Activated B cell treated with CpG ODN at 0.5 μM for 24 hours (primary cell): ENCODE measurements at regions of chr4 and their contacts with region 1.

Region 1: GRCh38 chr4:169010125-169011023 is at the start of gene CBR4:
- DNase-seq: peak; percentile 86
- ATAC-seq: peak; percentile 96
- H3K4me3 Mint-ChIP-seq: peak within 1 kb of the TSS; percentile 92
- H3K27ac Mint-ChIP-seq: peak within 1 kb of the TSS; percentile 93
- H3K4me1 Mint-ChIP-seq: peaks cover 33% of the 10 kb centered on the region
- H3K27me3 Mint-ChIP-seq: no peaks in the 10 kb centered on the region
- CTCF ChIP-seq: no peak
- total RNA-seq, gene CBR4: 25.7 and 25.8 TPM in 2 replicates

Region 2: GRCh38 chr4:168480931-168481611 is 529.3 kb before region 1 on chr4:
- CTCF ChIA-PET with region 1: no interaction called
- POLR2A ChIA-PET with region 1: interaction called, 17 read pairs
- intact Hi-C with region 1: loop called (anchors 1 kb)
- DNase-seq: no peak
- ATAC-seq: peak; percentile 53
- H3K4me3 Mint-ChIP-seq: peak overlapping the region; percentile 100
- H3K27ac Mint-ChIP-seq: peak overlapping the region; percentile 99
- H3K4me1 Mint-ChIP-seq: peaks cover 41% of the 10 kb centered on the region
- H3K27me3 Mint-ChIP-seq: peaks cover 3% of the 10 kb centered on the region
- CTCF ChIP-seq: no peak

Region 3: DNA sequence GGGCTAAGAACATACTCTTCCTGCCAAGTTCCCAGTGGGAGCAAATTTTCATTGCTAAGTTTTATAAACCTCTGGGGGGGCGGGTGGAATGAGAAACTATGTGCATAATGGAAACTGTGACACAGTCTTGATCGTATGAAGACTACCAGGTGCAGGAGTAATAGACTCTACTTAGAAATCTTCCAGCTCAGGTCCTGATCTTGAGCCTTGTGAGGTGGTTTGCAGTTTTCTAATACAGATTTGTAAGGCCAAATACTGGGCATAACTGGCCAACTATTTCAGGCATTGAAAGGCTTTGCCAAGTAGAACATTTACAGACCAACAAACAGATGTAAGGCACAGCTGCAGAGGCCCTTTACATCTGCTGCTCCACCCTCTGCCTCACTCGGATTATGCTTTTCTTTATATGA is 89.4 kb after region 1 on chr4:
- CTCF ChIA-PET with region 1: no interaction called
- POLR2A ChIA-PET with region 1: interaction called, 19 read pairs
- intact Hi-C with region 1: no loop called
- DNase-seq: no peak
- ATAC-seq: peak; percentile 6
- H3K4me3 Mint-ChIP-seq: no peak overlapping the region
- H3K27ac Mint-ChIP-seq: no peak overlapping the region
- H3K4me1 Mint-ChIP-seq: peaks cover 34% of the 10 kb centered on the region
- H3K27me3 Mint-ChIP-seq: no peaks in the 10 kb centered on the region
- CTCF ChIP-seq: no peak

Region 4: DNA sequence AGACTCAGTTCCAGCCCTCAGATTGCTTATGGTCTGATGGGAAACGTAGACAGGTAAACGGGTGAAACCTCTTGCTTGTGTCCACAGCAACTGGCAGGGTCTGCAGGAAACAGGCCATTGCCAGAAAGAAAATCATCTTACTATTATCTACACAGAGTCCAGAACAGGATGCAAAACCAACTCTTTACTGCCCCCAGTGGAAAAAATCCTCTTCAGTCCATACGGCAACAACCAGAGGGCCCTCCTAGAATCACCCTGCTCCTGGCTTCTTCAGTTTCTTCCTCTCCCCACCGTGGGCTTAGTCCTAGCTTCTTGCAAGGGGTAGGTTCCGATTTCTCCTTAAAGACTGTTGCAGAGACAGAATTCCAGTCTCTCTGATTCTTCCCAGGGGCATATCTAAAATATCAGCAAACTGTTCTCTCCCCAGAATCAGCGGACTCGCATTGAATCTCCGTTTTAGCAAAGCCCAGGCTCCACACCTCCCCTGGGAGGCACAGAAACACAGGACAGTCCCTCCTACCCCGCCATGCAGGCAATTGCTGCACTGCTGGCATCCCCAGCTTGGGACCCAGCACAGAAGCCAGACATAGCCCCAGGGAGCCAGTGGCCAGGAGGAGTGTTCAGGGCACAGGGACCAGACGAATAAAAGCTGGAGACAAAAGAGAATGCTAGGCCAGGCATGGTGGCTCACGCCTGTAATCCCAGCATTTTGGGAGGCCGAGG is 301.4 kb after region 1 on chr4:
- CTCF ChIA-PET with region 1: no interaction called
- POLR2A ChIA-PET with region 1: no interaction called
- intact Hi-C with region 1: loop called (anchors 5 kb)
- DNase-seq: no peak
- ATAC-seq: peak; percentile 74
- H3K4me3 Mint-ChIP-seq: no peak overlapping the region
- H3K27ac Mint-ChIP-seq: no peak overlapping the region
- H3K4me1 Mint-ChIP-seq: no peaks in the 10 kb centered on the region
- H3K27me3 Mint-ChIP-seq: peaks cover 3% of the 10 kb centered on the region
- CTCF ChIP-seq: no peak

Region 5: GRCh38 chr4:169612871-169613859 is 602.8 kb after region 1 on chr4:
- CTCF ChIA-PET with region 1: interaction called, 3 read pairs
- POLR2A ChIA-PET with region 1: interaction called, 9 read pairs
- intact Hi-C with region 1: loop called (anchors 1 kb)
- DNase-seq: peak; percentile 52
- ATAC-seq: peak; percentile 22
- H3K4me3 Mint-ChIP-seq: peak overlapping the region; percentile 99
- H3K27ac Mint-ChIP-seq: peak overlapping the region; percentile 99
- H3K4me1 Mint-ChIP-seq: peaks cover 27% of the 10 kb centered on the region
- H3K27me3 Mint-ChIP-seq: no peaks in the 10 kb centered on the region
- CTCF ChIP-seq: no peak

Region 6: DNA sequence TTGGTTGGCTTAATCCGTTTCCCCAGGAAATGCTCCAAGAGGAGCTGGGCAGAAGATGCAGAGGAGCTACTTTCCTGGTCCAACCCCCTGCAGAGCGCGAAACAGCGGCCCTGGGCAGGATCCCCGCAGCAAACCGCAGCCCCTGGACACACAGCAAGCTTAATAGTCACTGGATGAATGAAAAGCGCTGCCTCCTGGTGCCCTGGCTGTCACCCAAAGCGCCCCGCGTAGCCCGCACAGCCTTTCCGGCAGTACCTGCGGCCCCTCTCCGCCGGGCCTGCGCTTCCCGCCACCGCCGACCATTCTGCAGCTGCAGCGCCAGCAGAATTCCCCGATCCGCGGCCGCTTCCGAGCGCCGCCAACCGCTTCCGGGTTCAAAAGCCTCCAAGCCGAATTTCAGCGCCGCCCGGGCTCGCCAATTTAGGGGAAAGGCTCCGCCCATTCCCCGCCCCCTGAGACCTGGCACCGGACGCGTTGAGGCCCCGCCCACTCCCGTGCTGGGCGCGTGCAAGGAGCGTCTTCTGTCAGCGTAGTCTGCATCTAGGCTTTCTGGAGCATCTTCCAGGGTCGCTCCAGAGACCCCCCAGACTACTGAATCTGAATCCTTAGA is 747.3 kb after region 1 on chr4 and contains the start of gene HPF1:
- CTCF ChIA-PET with region 1: no interaction called
- POLR2A ChIA-PET with region 1: no interaction called
- intact Hi-C with region 1: loop called (anchors 5 kb)
- DNase-seq: peak; percentile 85
- ATAC-seq: peak; percentile 95
- H3K4me3 Mint-ChIP-seq: peak within 1 kb of the TSS; percentile 92
- H3K27ac Mint-ChIP-seq: peak within 1 kb of the TSS; percentile 68
- H3K4me1 Mint-ChIP-seq: peaks cover 23% of the 10 kb centered on the region
- H3K27me3 Mint-ChIP-seq: no peaks in the 10 kb centered on the region
- CTCF ChIP-seq: no peak
- total RNA-seq, gene HPF1: 17.9 and 19.5 TPM in 2 replicates